ENCODE measurements at regions of chr9 and their contacts with region 1.

Region 1: GRCh38 chr9:22790329-22790728 is 343.7 kb downstream of the DMRTA1 start:
- DNase-seq: no peak
- ATAC-seq: no peak
- H3K4me3 ChIP-seq: no peak overlapping the region
- H3K27ac ChIP-seq: no peak overlapping the region
- H3K4me1 ChIP-seq: no peaks in the 10 kb centered on the region
- H3K27me3 ChIP-seq: no peaks in the 10 kb centered on the region
- CTCF ChIP-seq: no peak
- EP300 ChIP-seq: no peak
- POLR2A ChIP-seq: no peak
- RAD21 ChIP-seq: no peak

Region 2: GRCh38 chr9:22773501-22774220 is 16.7 kb before region 1 on chr9:
- CTCF ChIA-PET with region 1: no interaction called
- POLR2A ChIA-PET with region 1: no interaction called
- RAD21 ChIA-PET with region 1: no interaction called
- SMC1A ChIA-PET with region 1: no interaction called
- in situ Hi-C with region 1: no loop called
- intact Hi-C with region 1: no loop called
- DNase-seq: no peak
- ATAC-seq: no peak
- H3K4me3 ChIP-seq: no peak overlapping the region
- H3K27ac ChIP-seq: no peak overlapping the region
- H3K4me1 ChIP-seq: no peaks in the 10 kb centered on the region
- H3K27me3 ChIP-seq: no peaks in the 10 kb centered on the region
- CTCF ChIP-seq: no peak
- EP300 ChIP-seq: no peak
- POLR2A ChIP-seq: no peak
- RAD21 ChIP-seq: no peak

Region 3: GRCh38 chr9:22829236-22829635 is 38.9 kb after region 1 on chr9:
- CTCF ChIA-PET with region 1: no interaction called
- POLR2A ChIA-PET with region 1: no interaction called
- RAD21 ChIA-PET with region 1: no interaction called
- SMC1A ChIA-PET with region 1: no interaction called
- in situ Hi-C with region 1: no loop called
- intact Hi-C with region 1: loop called (anchors 5 kb)
- DNase-seq: no peak
- ATAC-seq: no peak
- H3K4me3 ChIP-seq: no peak overlapping the region
- H3K27ac ChIP-seq: no peak overlapping the region
- H3K4me1 ChIP-seq: no peaks in the 10 kb centered on the region
- H3K27me3 ChIP-seq: no peaks in the 10 kb centered on the region
- CTCF ChIP-seq: no peak
- EP300 ChIP-seq: no peak
- POLR2A ChIP-seq: no peak
- RAD21 ChIP-seq: no peak

Measured in GM12878 (cell line).